KBM-7 (cell line): ENCODE measurements at regions of chr1 and their contacts with region 1.

Region 1: DNA sequence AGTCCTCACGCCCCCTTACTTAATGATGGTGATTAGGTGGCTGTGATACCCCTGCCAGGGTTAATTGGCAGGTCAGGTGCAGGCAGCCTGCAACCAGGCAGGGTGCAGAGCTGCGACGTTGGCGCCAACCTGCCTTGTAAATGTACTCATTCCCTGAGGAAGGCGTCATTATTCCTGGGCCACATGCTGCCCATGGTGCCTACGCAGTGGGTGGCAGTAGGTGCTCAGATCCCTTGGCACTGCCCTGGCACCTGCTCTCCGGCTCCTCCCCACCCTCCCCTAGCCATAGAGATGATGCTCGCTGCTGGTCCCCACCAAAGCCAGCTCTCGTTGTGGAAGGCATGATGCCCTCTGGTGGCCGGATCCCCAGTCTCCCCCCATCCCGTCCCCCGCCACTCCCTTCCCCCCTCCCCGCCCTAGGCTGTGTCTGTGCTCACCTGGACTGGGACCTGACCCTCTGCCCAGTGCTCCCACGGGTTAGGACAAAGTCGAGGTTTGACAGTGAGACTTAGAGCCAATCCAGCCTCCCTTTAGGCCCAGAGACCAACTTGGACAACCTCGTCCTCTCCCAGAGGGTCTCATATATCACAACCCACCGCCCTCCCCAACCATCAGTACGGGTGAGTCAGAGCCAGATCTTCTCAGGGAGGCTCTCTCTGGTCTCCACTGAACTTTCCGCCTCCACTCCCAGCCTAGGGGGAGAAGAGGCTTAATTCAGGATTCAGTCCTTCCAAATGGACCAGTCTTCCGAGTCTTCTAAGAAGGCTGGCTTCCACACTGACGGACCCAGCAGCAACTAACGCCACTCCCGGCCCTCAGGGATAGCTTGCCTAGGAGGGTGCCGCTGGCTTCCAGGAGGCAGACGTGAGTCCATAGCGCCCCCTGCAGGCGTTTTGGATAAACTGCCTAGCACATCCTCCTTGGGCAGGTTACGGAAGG is 5.7 kb downstream of the KRTCAP2 start:
- DNase-seq: peak; percentile 91

Region 2: DNA sequence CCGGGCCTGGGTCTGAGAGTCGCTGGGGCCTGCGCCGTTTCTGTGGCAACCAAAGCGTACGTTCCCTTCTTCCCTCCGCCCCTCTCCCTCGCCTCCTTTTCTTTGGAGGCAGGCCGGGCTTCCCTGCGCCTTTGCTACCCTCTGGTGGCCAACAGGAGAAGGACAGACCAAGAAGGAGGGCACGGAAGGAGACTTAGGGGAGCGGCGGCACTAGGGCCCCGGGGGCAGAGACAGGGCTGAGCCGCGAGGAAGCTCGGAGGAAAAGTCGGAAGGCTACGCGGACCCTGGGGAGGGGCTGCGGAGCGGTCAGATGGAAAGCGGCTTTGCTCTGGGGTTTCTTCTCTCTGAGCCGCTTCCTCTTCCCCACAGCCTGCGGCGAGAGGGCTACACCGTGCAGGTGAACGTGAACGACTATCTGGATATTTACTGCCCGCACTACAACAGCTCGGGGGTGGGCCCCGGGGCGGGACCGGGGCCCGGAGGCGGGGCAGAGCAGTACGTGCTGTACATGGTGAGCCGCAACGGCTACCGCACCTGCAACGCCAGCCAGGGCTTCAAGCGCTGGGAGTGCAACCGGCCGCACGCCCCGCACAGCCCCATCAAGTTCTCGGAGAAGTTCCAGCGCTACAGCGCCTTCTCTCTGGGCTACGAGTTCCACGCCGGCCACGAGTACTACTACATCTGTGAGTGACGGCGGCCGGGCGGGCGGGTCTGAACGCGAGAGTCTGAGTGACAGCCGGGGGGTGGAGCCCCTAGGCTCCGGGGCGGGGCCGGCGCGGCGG is 82.5 kb before region 1 on chr1:
- in situ Hi-C with region 1: loop called (anchors 10 kb)
- DNase-seq: peak; percentile 98